Activated CD8-positive, alpha-beta T cell treated with anti-CD3 and anti-CD28 coated beads for 36 hours (primary cell): ENCODE measurements at regions of chr13 and their contacts with region 1.

Region 1: DNA sequence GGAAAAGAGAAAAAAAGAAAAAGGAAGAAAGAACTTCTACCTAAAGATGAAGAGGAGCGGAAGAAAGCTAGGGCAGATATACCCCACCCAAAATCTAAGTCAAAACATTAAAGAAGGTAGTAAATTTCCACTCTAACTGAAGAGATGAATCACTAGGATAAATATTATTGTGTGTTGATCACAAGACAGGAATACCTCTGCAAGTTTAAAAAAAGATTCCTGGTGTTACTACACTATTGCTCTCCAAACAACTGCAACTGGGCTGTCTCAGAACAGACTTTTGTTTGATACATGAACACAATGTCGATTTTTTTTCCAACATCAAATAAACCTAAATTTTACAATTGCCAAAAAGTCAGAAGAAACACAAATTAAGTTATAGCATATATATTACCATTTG is 6.8 kb downstream of the HSPH1 start:
- DNase-seq: no peak
- ATAC-seq: no peak
- H3K4me3 Mint-ChIP-seq: no peak overlapping the region
- H3K27ac Mint-ChIP-seq: no peak overlapping the region
- H3K4me1 Mint-ChIP-seq: peaks cover 54% of the 10 kb centered on the region
- H3K27me3 Mint-ChIP-seq: no peaks in the 10 kb centered on the region
- CTCF ChIP-seq: no peak

Region 2: GRCh38 chr13:31131470-31131961 is 23.4 kb before region 1 on chr13:
- CTCF ChIA-PET with region 1: interaction called, 41 read pairs
- POLR2A ChIA-PET with region 1: no interaction called
- intact Hi-C with region 1: no loop called
- DNase-seq: no peak
- ATAC-seq: no peak
- H3K4me3 Mint-ChIP-seq: no peak overlapping the region
- H3K27ac Mint-ChIP-seq: no peak overlapping the region
- H3K4me1 Mint-ChIP-seq: peaks cover 42% of the 10 kb centered on the region
- H3K27me3 Mint-ChIP-seq: peaks cover 19% of the 10 kb centered on the region
- CTCF ChIP-seq: no peak

Region 3: GRCh38 chr13:31184981-31185685 is 30.2 kb after region 1 on chr13:
- CTCF ChIA-PET with region 1: no interaction called
- POLR2A ChIA-PET with region 1: no interaction called
- intact Hi-C with region 1: no loop called
- DNase-seq: no peak
- ATAC-seq: no peak
- H3K4me3 Mint-ChIP-seq: no peak overlapping the region
- H3K27ac Mint-ChIP-seq: no peak overlapping the region
- H3K4me1 Mint-ChIP-seq: no peaks in the 10 kb centered on the region
- H3K27me3 Mint-ChIP-seq: no peaks in the 10 kb centered on the region
- CTCF ChIP-seq: no peak